Transverse colon (tissue), 4 donors: ENCODE measurements at regions of chr11 and their contacts with region 1.

Region 1: GRCh38 chr11:130131961-130132850 is 27.4 kb upstream of the ST14 start:
- DNase-seq: peak; percentile 49
- H3K4me3 ChIP-seq: no peak overlapping the region
- H3K27ac ChIP-seq: no peak overlapping the region
- H3K4me1 ChIP-seq: no peaks in the 10 kb centered on the region
- H3K27me3 ChIP-seq: no peaks in the 10 kb centered on the region
- CTCF ChIP-seq: peak; percentile 82 to 92 (median 86)
- EP300 ChIP-seq: no peak
- POLR2A ChIP-seq: no peak

Region 2: DNA sequence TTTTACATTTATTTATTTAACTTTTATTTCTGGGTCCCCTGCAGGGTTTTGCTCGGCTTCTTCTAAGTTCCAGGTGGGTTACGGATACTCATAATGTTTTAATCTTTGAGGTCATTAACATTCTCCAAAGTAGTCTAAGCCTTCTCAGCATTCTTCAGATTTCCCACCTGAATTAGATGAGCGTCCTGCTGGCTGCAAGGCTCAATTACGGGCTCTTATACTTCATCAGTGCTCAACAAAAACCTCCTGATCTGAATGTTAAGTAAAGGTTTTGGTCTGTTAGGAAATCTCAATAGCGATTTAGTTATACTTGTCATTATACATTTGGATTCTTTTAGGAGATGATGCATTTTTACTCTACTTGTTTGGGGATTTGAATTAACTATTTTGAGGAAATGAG is 209.5 kb before region 1 on chr11:
- in situ Hi-C with region 1: loop called (anchors 5 to 10 kb)
- intact Hi-C with region 1: loop called (anchors 2 kb)
- DNase-seq: no peak
- H3K4me3 ChIP-seq: no peak overlapping the region
- H3K27ac ChIP-seq: no peak overlapping the region
- H3K4me1 ChIP-seq: peaks cover 0 to 5% (median 0%) of the 10 kb centered on the region in 4 donors
- H3K27me3 ChIP-seq: no peaks in the 10 kb centered on the region
- CTCF ChIP-seq: no peak
- EP300 ChIP-seq: no peak
- POLR2A ChIP-seq: no peak

Region 3: DNA sequence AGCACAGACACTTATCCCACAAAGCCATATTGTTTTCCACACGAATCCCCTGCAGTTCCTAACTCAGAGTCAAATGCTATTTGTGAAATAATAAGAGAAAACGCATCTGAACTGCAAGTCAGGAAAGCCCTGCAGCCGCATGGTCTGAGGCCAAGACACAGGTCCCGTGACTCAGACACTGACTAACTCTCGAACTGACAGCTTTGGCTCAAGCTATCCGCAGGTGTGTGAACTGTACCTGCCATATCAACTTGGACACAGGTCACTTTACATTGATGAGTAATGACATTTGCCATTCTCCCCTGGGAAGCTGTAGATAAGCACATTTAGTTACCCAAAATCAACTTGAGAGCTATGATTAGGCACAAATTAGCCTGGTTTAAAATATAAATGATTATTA is 201.9 kb before region 1 on chr11:
- in situ Hi-C with region 1: loop called in 2 of 4 experiments (anchors 10 kb)
- intact Hi-C with region 1: loop called (anchors 2 kb)
- DNase-seq: no peak
- H3K4me3 ChIP-seq: no peak overlapping the region
- H3K27ac ChIP-seq: no peak overlapping the region
- H3K4me1 ChIP-seq: no peaks in the 10 kb centered on the region
- H3K27me3 ChIP-seq: no peaks in the 10 kb centered on the region
- CTCF ChIP-seq: no peak
- EP300 ChIP-seq: no peak
- POLR2A ChIP-seq: no peak

Region 4: GRCh38 chr11:129992161-129992944 is 139.9 kb before region 1 on chr11:
- in situ Hi-C with region 1: loop called in 1 of 4 experiments (anchors 10 kb)
- intact Hi-C with region 1: no loop called
- DNase-seq: peak; percentile 58
- H3K4me3 ChIP-seq: no peak overlapping the region
- H3K27ac ChIP-seq: peak overlapping the region in 1 of 4 donors; percentile 42
- H3K4me1 ChIP-seq: peaks cover 17 to 48% (median 31%) of the 10 kb centered on the region in 4 donors
- H3K27me3 ChIP-seq: no peaks in the 10 kb centered on the region
- CTCF ChIP-seq: peak in 3 of 5 experiments; percentile 27 to 42 (median 29)
- EP300 ChIP-seq: no peak
- POLR2A ChIP-seq: no peak

Region 5: DNA sequence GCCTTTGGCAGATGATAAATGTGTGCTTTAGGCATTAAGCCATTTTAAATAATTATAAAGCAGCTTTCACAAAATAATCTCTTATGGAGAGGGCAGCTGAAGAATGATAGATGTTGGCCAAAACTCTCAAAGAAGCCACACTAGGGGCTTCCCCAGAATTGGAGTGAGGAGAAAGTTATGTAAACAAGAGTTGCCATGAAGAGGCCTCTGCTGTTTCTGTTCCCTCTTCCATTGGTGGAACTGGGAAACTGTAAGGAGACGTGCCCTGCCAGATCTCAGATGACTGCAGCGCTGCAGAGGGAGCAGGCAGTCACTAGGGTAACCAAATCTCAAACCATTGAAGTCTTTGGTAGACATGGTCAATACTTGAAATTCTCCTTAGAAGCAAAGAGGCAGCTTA is 81.9 kb before region 1 on chr11:
- in situ Hi-C with region 1: no loop called
- intact Hi-C with region 1: no loop called
- DNase-seq: no peak
- H3K4me3 ChIP-seq: no peak overlapping the region
- H3K27ac ChIP-seq: peak overlapping the region in 2 of 4 donors; percentile 9 to 18
- H3K4me1 ChIP-seq: peaks cover 0 to 25% (median 4%) of the 10 kb centered on the region in 4 donors
- H3K27me3 ChIP-seq: no peaks in the 10 kb centered on the region
- CTCF ChIP-seq: no peak
- EP300 ChIP-seq: no peak
- POLR2A ChIP-seq: no peak

Region 6: DNA sequence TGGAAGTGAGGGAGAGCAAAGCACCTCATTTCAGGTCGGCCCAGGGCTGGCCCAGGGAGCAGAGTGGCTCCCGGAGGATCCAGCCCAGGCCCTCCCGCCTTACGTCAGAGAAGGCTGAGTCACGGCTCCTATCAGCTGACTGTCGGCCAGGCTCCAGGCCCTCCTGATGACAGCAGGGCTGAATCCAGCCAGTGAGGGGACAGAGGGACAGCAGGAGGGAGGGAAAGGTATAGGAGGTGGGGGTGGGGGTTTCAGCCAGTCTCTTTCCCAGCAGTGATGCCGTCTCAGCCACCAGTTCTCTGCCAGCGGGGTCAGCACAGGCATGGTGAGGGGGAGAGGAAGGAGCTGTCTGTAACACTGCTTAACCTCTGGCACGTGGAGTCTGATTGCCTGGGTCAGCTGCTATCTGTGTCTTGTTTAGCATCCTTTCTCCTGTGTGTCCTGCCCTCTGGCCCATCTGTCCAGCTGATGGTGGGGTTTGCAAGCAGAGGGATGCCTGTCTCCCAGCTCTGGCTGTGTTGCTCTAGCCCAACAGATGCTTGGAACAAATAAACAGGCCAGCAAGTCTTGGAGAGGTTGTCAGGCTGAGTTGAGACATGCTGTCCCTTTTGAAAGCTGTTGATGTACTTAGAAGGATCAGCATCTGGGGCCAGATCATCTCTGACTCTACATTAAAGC is 390.2 kb after region 1 on chr11:
- in situ Hi-C with region 1: no loop called
- intact Hi-C with region 1: no loop called
- DNase-seq: peak; percentile 76
- H3K4me3 ChIP-seq: no peak overlapping the region
- H3K27ac ChIP-seq: peak overlapping the region; percentile 64 to 81 (median 72)
- H3K4me1 ChIP-seq: peaks cover 0 to 14% (median 7%) of the 10 kb centered on the region in 4 donors
- H3K27me3 ChIP-seq: no peaks in the 10 kb centered on the region
- CTCF ChIP-seq: no peak
- EP300 ChIP-seq: peak; percentile 77
- POLR2A ChIP-seq: no peak